KBM-7 (cell line): ENCODE measurements at regions of chr1 and their contacts with region 1.

Region 1: GRCh38 chr1:109548321-109549267 is at the start of gene GNAI3:
- DNase-seq: peak; percentile 97

Region 2: DNA sequence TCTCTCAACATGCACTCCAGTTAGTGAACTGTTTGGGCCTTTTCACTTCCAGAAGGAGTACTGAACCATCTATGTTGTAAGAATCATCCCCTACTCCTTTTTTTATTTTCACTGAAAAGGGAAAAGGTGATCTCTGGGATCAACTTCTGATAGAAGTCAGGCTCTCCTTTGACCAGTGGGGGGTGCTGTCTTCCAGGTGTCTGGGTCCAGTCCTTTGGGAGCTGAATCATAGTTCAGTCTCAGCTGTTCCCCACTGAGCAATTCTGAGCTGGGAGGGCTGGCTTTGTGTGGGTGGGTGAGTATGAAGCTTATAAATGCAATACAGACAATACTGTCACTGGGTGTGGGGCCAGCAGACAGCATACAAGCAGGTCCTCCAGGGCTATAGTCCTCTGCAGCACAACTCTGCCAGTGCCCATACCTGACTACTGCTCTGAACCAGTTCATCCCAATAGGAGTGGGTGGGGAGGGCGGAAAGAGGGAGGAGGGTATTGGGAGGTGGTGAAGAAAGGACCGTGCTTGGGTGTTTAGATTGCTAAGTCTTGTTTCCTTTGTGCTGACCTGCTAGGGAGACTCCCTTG is 347.4 kb before region 1 on chr1:
- in situ Hi-C with region 1: no loop called
- DNase-seq: peak; percentile 57

Region 3: GRCh38 chr1:109630081-109630897 is 81.7 kb after region 1 on chr1:
- in situ Hi-C with region 1: loop called (anchors 10 kb)
- DNase-seq: no peak

Region 4: DNA sequence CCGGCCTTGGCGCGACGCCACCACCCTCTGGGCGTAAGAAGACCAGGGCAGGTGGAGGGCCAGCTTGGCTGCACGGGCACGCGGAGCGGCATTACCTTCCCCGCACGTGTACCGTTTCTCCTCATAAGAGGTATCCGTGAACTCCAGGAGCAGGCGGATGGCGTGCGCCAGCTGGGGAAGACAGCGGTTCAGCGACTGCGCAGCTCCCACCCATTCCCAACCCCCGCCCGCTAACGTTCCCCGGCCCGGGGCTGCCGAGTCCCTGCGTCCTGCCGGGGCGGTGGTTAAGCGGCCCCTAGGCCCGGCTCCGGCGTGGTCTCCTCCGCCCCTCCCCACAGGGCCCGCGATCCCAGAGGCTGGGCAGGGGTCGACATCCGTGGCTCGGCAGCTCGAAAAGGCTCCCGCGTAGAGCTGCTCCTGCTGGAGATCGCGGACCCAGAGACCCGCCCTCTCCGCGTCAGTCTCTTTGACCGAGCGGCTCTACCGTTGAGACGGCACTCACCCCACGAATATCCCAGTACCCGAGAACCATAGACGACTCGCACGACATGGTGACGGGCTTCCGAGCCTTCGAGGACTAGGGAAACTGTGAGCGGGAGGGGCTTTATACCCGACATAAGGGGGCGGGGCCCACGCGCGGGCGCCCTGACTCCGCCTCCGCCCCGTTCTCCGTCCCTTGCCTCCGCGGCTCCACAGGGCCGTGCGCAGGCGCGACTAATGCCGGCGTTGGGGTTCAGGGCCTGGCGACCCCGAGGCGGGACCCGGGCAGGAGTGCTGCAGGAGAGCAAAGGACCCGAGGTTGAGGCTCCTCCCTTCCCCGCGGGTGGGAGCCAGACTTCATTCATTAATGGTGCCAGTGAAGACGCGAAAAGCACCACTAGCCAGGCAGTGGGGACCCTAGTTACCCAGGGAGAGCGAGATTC is 191.4 kb after region 1 on chr1:
- in situ Hi-C with region 1: no loop called
- DNase-seq: no peak

Region 5: DNA sequence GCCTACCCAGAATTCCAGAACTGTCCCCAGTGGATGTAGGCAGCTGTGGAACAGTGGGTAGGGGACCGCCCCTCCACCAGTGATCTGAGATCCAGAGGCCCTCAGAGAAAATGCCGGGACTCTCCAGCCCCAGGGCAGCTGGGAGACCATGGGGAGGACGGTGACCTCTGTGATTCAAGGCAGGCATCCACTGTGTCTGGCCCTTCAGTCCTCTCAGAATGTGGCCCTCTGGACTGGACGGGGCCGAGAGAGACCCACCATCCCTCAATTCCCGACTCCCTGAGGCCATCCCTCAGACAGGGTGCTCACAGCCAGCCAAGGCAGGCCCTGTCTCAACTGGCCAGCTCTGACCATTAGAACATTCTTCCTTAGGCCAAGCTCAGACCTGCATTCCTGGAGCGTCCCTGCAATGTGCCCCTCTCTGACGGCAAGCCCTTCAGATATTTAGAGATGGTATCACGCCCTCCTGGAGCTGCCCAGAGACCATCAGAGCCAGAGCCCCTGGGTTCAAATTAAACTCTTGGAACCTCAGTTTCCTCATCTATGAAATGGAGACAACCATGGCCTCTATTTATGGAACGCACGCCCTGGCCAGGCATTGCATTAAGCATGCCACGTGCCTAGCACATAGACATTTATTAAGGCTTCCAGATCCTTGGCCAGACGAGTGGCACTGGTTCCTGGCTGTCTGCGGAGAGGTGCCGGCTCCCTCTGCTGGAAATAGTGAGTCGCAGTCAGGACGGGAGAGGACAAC is 224.7 kb after region 1 on chr1:
- in situ Hi-C with region 1: loop called (anchors 10 kb)
- DNase-seq: peak; percentile 83

Region 6: GRCh38 chr1:109984456-109985275 is 436.1 kb after region 1 on chr1 and contains the start of gene AHCYL1:
- in situ Hi-C with region 1: loop called (anchors 25 kb)
- DNase-seq: peak; percentile 99